A673 (cell line): ENCODE measurements at regions of chr9 and their contacts with region 1.

Region 1: GRCh38 chr9:115013998-115014397 is 83.6 kb upstream of the TNFSF8 start:
- DNase-seq: peak; percentile 87
- H3K4me3 ChIP-seq: no peak overlapping the region
- H3K27ac ChIP-seq: no peak overlapping the region
- H3K4me1 ChIP-seq: peaks cover 5% of the 10 kb centered on the region
- H3K27me3 ChIP-seq: no peaks in the 10 kb centered on the region
- CTCF ChIP-seq: peak; percentile 87

Region 2: DNA sequence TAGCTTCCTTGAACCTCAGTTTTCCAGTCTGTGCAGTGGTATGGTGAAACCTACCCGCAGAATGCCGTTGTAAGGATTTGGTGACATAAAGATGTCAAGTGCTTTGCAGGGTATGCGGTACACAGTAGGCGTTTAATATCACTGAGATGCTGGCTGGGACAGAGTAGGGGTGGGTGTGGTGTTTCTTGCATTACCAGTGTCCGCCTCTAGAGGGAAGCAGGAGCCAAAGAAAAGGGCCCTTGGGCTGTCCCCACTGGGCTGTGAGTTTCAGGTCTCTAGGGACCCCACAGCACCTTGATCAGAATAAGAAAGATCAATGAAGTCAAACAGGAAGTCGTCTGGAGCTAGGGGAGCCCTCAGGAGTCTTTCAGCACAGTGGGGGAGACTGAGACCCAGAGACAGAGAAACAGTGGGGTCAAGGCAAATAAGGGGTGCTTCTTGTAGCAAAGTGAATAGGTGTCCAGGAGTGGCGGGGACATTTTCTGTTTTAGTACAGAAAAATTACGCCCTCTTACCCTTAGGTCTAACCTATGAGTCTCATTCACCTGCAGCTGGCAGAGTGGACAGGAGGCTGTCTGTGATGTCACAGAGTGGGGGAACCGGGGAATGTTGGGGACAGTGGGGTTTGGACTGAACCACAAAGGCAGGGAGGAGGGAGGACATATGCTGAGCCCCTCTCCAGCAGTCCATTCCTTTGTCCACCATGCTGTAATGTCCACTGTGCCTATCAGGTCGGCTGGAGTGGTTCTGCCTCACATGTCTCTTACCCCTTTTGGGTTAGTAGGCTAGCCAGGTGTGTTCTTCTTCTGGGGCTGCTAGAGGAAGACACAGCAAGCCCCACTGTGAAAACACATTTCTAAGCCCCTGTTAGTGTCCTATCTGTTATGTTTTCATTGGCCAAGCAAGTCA is 351.7 kb before region 1 on chr9:
- CTCF ChIA-PET with region 1: interaction called, 4 read pairs
- POLR2A ChIA-PET with region 1: no interaction called
- intact Hi-C with region 1: loop called (anchors 1 kb)
- DNase-seq: peak; percentile 71
- H3K4me3 ChIP-seq: no peak overlapping the region
- H3K27ac ChIP-seq: no peak overlapping the region
- H3K4me1 ChIP-seq: no peaks in the 10 kb centered on the region
- H3K27me3 ChIP-seq: no peaks in the 10 kb centered on the region
- CTCF ChIP-seq: peak; percentile 87

Region 3: GRCh38 chr9:114738581-114739316 is 275.2 kb before region 1 on chr9:
- CTCF ChIA-PET with region 1: interaction called, 13 read pairs
- POLR2A ChIA-PET with region 1: no interaction called
- intact Hi-C with region 1: loop called (anchors 1 kb)
- DNase-seq: peak; percentile 82
- H3K4me3 ChIP-seq: no peak overlapping the region
- H3K27ac ChIP-seq: no peak overlapping the region
- H3K4me1 ChIP-seq: peaks cover 13% of the 10 kb centered on the region
- H3K27me3 ChIP-seq: no peaks in the 10 kb centered on the region
- CTCF ChIP-seq: peak; percentile 86

Region 4: DNA sequence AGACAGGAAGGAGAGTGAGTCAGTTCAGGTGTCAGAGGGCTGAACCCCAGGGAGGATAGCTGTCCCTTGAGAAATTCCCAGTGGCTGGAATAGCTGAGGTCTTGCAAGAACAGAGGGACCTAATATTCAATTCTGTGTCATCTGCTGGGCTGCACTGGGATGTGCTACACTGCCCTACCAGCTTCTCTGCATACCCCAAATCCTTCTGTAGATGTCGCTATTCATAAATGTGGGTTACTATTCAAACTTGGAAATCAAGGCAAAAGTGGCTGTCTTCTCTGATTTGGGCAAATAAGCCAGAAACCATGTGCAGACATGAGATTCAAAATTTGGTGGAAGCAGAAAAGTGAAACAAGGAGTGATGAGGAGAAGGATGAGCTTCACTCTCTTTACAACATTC is 99.9 kb before region 1 on chr9:
- CTCF ChIA-PET with region 1: interaction called, 20 read pairs
- POLR2A ChIA-PET with region 1: no interaction called
- intact Hi-C with region 1: loop called (anchors 1 kb)
- DNase-seq: peak; percentile 50
- H3K4me3 ChIP-seq: no peak overlapping the region
- H3K27ac ChIP-seq: no peak overlapping the region
- H3K4me1 ChIP-seq: peaks cover 5% of the 10 kb centered on the region
- H3K27me3 ChIP-seq: no peaks in the 10 kb centered on the region
- CTCF ChIP-seq: peak; percentile 68

Region 5: GRCh38 chr9:116661037-116661954 is 1647.3 kb after region 1 on chr9:
- CTCF ChIA-PET with region 1: no interaction called
- POLR2A ChIA-PET with region 1: no interaction called
- intact Hi-C with region 1: loop called (anchors 2 kb)
- DNase-seq: peak; percentile 81
- H3K4me3 ChIP-seq: no peak overlapping the region
- H3K27ac ChIP-seq: no peak overlapping the region
- H3K4me1 ChIP-seq: peaks cover 22% of the 10 kb centered on the region
- H3K27me3 ChIP-seq: no peaks in the 10 kb centered on the region
- CTCF ChIP-seq: peak; percentile 86